ENCODE measurements at regions of chr10 and their contacts with region 1.

Region 1: DNA sequence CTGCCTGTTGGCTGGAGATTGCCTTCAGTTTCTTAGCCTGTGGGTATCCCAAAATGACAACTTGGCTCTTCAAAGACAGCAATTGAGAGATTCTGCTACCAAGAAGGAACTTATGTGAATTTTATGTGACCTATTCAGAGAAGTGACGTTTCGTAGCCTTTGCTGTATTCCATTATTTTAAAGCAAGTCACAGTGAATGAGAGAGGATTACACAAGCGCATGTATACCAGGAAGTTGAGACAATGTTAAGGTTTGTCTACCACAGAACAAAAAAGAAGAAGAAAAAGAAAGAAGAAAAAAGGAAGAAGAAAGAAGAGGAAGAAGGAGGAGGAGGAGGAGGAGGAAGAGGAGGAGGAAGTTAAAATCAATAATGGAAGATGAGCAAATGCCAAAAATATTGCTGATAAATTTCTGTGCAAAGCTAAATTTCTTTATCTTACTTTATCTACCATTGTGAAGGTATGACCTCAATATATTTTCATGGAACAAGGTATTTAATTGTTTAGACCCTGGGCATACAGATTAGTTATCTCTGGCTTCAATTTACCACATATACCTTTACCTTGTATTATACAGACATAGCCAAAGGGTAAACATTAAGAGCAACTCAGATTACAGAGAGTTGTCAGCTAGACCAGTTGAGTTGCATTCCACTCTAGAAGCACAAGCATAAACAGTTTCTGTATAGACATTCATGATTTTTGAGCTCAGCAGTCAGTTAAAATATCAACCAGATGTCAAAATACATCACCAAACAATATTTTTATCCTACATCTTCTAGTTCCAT is 857.1 kb upstream of the ZWINT start:
- DNase-seq: peak; percentile 13 to 89
- H3K4me3 ChIP-seq: no peak overlapping the region
- H3K27ac ChIP-seq: peak overlapping the region; percentile 18
- H3K4me1 ChIP-seq: peaks cover 14% of the 10 kb centered on the region
- H3K27me3 ChIP-seq: no peaks in the 10 kb centered on the region
- CTCF ChIP-seq: no peak

Region 2: GRCh38 chr10:56874950-56875349 is 343.2 kb before region 1 on chr10:
- CTCF ChIA-PET with region 1: no interaction called
- POLR2A ChIA-PET with region 1: no interaction called
- intact Hi-C with region 1: loop called (anchors 5 kb)
- DNase-seq: no peak
- H3K4me3 ChIP-seq: no peak overlapping the region
- H3K27ac ChIP-seq: no peak overlapping the region
- H3K4me1 ChIP-seq: no peaks in the 10 kb centered on the region
- H3K27me3 ChIP-seq: no peaks in the 10 kb centered on the region
- CTCF ChIP-seq: no peak

Region 3: GRCh38 chr10:57202361-57202760 is 15.8 kb before region 1 on chr10:
- CTCF ChIA-PET with region 1: no interaction called
- POLR2A ChIA-PET with region 1: no interaction called
- intact Hi-C with region 1: no loop called
- DNase-seq: no peak
- H3K4me3 ChIP-seq: no peak overlapping the region
- H3K27ac ChIP-seq: no peak overlapping the region
- H3K4me1 ChIP-seq: no peaks in the 10 kb centered on the region
- H3K27me3 ChIP-seq: no peaks in the 10 kb centered on the region
- CTCF ChIP-seq: no peak

Region 4: DNA sequence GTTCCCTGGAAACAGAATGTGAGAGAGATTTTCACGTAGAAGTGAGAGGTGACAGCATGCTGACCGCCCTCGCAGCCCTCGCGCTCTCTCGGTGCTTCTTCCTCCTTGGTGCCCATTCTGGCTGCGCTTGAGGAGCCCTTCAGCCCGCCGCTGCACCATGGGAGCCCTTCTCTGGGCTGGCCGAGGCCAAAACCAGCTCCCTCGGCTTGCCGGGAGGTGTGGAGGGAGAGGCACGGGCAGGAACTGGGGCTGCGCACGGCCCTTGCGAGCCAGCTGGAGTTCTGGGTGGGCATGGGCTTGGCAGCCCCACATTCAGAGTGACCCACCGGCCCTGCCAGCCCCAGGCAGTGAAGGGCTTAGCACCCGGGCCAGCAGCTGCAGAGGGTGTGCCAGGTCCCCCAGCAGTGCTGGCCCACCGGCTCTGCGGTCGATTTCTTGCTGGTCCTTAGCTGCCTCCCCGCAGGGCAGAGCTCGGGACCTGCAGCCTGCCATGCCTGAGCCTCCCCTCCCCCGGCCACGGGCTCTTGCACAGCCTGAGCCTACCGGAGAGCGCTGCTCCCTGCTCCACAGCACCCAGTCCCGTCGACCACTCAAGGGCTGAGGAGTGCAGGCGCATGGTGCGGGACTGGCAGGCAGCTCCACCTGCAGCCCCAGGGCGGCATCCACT is 31.6 kb after region 1 on chr10:
- CTCF ChIA-PET with region 1: no interaction called
- POLR2A ChIA-PET with region 1: no interaction called
- intact Hi-C with region 1: no loop called
- DNase-seq: no peak
- H3K4me3 ChIP-seq: no peak overlapping the region
- H3K27ac ChIP-seq: no peak overlapping the region
- H3K4me1 ChIP-seq: no peaks in the 10 kb centered on the region
- H3K27me3 ChIP-seq: no peaks in the 10 kb centered on the region
- CTCF ChIP-seq: no peak